ENCODE measurements at regions of chr12 and their contacts with region 1.

Region 1: GRCh38 chr12:47812797-47813510 is 6.7 kb downstream of the HDAC7 start:
- DNase-seq: peak; percentile 83
- ATAC-seq: peak; percentile 74
- H3K4me3 Mint-ChIP-seq: peak overlapping the region; percentile 84
- H3K27ac Mint-ChIP-seq: peak overlapping the region; percentile 99
- H3K4me1 Mint-ChIP-seq: peaks cover 97% of the 10 kb centered on the region
- H3K27me3 Mint-ChIP-seq: no peaks in the 10 kb centered on the region
- CTCF ChIP-seq: no peak

Region 2: GRCh38 chr12:46382964-46383653 is 1429.8 kb before region 1 on chr12:
- CTCF ChIA-PET with region 1: no interaction called
- POLR2A ChIA-PET with region 1: no interaction called
- intact Hi-C with region 1: loop called (anchors 5 kb)
- DNase-seq: peak; percentile 92
- ATAC-seq: peak; percentile 69
- H3K4me3 Mint-ChIP-seq: peak overlapping the region; percentile 91
- H3K27ac Mint-ChIP-seq: peak overlapping the region; percentile 94
- H3K4me1 Mint-ChIP-seq: peaks cover 46% of the 10 kb centered on the region
- H3K27me3 Mint-ChIP-seq: no peaks in the 10 kb centered on the region
- CTCF ChIP-seq: no peak

Region 3: GRCh38 chr12:47391566-47391965 is 421.4 kb before region 1 on chr12:
- CTCF ChIA-PET with region 1: no interaction called
- POLR2A ChIA-PET with region 1: no interaction called
- intact Hi-C with region 1: loop called (anchors 2 kb)
- DNase-seq: no peak
- ATAC-seq: peak; percentile 45
- H3K4me3 Mint-ChIP-seq: peak overlapping the region; percentile 15
- H3K27ac Mint-ChIP-seq: peak overlapping the region; percentile 100
- H3K4me1 Mint-ChIP-seq: peaks cover 83% of the 10 kb centered on the region
- H3K27me3 Mint-ChIP-seq: no peaks in the 10 kb centered on the region
- CTCF ChIP-seq: no peak

Region 4: DNA sequence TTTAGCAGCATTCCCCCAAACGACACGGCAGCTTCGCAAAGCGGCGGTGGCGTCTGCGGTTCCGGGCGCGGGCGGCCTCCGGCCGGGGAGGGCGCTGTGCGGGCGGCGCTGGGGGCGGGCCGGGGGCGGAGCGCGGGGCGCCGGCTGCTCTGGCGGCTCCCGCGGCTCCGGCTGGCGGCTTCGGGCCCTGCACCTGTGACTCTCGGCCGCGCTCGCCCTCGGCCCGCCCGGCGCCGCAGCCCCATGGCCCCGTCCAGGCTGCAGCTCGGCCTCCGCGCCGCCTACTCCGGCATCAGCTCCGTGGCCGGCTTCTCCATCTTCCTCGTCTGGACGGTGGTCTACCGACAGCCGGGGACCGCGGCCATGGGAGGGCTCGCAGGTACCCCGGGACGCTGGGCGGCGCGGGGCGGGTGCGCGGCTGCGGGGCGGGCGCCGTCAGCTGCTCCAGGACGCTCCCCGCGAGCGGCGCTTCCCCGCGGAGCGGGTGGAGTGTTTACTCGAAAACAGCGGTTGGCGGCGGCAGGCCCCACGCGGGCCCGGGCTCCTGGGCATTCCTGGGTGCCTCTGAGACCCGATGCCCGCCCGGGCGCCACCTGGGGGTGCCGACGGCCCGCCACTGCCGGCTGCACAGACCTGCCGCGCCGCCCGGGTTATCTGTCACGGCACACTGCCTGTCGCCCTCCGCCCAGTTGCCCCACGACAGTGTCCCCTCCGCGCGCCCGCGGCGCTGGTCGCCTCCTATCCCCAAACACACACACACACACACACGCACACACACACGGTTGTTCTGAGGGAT is 39.7 kb before region 1 on chr12 and contains the start of gene SLC48A1:
- CTCF ChIA-PET with region 1: interaction called, 4 read pairs
- POLR2A ChIA-PET with region 1: interaction called, 4 read pairs
- intact Hi-C with region 1: loop called (anchors 1 kb)
- DNase-seq: peak; percentile 82
- ATAC-seq: peak; percentile 94
- H3K4me3 Mint-ChIP-seq: peak within 1 kb of the TSS; percentile 87
- H3K27ac Mint-ChIP-seq: peak within 1 kb of the TSS; percentile 69
- H3K4me1 Mint-ChIP-seq: peaks cover 18% of the 10 kb centered on the region
- H3K27me3 Mint-ChIP-seq: no peaks in the 10 kb centered on the region
- CTCF ChIP-seq: no peak
- total RNA-seq, gene SLC48A1: 12.7 and 12.8 TPM in 2 replicates

Region 5: DNA sequence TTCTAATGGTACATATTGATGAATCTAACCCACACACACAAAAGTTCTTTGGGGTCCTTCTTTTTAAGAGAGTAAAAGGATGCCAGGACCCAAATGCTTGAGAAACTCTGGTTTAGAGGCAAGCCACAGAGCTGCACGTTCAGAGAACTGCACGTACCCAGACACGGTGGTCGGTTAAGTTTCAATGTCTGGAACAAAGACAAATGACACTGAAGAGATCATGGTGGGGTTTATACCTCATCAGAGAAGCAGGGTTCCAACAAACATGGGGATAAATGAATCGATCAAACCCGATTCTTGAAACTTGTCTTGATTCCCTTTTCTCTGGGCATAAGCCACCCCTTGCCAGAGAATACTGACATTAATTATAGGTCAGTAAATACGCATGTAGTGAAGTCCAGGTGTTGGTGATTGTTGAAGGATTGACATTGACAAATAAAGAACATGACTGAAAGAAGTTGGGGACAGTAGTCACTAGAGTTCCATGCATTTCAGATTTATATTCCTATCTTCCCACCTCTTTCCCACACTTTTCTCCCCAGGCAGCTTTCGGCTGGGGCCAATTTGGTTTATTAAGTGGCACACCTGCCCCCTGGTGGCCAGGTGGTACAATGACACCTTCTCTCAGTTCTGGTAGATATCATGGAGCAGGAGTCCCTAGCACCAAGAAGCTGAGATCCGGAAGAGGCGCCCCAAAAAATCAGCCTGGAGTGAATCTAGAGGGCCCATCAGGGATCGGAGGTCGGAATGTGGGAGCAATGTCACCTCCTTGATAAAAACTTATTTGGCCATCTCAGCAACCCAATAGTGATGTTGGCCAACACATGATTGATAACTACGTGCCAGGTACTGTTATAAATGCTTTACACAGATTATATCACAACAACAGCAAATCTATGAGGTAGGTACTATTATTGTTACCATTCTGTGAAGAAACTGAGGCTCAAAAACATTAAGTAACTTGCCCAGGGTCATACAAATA is 24.5 kb after region 1 on chr12:
- CTCF ChIA-PET with region 1: interaction called, 72 read pairs
- POLR2A ChIA-PET with region 1: interaction called, 573 read pairs
- intact Hi-C with region 1: loop called (anchors 1 kb)
- DNase-seq: peak; percentile 53
- ATAC-seq: peak; percentile 52
- H3K4me3 Mint-ChIP-seq: peak overlapping the region; percentile 25
- H3K27ac Mint-ChIP-seq: peak overlapping the region; percentile 36
- H3K4me1 Mint-ChIP-seq: peaks cover 58% of the 10 kb centered on the region
- H3K27me3 Mint-ChIP-seq: no peaks in the 10 kb centered on the region
- CTCF ChIP-seq: no peak

Region 6: DNA sequence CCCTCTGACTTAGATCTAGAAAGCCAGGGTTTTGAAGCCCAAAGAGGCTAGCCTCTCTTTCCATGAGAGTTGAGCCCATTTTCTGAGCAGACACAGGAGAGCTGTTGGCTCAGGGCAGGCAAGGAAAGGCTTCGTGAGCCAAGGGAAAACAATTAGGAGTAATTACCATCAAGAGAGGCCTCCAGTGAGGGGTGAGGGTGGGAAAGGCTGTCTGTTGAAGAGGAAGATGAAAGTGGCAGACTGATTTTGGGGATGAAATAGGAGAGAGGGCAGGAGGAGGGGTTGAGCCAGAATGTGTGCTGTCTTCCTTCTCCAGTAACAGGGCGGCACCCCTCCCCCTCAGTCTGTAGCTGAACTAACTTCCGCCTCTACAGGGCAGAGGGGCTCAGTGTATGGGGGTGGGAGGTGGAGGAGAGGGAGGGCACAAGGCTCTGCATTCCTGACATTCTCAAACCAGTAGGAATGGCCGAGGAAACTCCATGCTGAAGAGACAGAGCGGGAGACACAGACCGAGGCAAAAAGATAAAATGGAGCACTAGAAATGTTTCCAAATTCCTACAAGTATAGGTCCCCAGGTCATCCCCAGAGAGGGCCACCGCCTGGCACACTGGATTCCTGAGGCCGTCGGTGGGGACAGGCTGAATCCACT is 224.4 kb after region 1 on chr12:
- CTCF ChIA-PET with region 1: no interaction called
- POLR2A ChIA-PET with region 1: no interaction called
- intact Hi-C with region 1: no loop called
- DNase-seq: no peak
- ATAC-seq: no peak
- H3K4me3 Mint-ChIP-seq: no peak overlapping the region
- H3K27ac Mint-ChIP-seq: peak overlapping the region; percentile 22
- H3K4me1 Mint-ChIP-seq: peaks cover 20% of the 10 kb centered on the region
- H3K27me3 Mint-ChIP-seq: no peaks in the 10 kb centered on the region
- CTCF ChIP-seq: no peak

Measured in activated B cell treated with CpG ODN at 0.5 μM for 24 hours (primary cell).